ENCODE measurements at regions of chr20 and their contacts with region 1.

Region 1: GRCh38 chr20:53869466-53870258 is 200.7 kb downstream of the BCAS1 start:
- DNase-seq: peak; percentile 70
- H3K4me3 Mint-ChIP-seq: peak overlapping the region; percentile 62
- H3K27ac Mint-ChIP-seq: peak overlapping the region; percentile 85
- H3K4me1 Mint-ChIP-seq: peaks cover 73% of the 10 kb centered on the region
- H3K27me3 Mint-ChIP-seq: no peaks in the 10 kb centered on the region

Region 2: DNA sequence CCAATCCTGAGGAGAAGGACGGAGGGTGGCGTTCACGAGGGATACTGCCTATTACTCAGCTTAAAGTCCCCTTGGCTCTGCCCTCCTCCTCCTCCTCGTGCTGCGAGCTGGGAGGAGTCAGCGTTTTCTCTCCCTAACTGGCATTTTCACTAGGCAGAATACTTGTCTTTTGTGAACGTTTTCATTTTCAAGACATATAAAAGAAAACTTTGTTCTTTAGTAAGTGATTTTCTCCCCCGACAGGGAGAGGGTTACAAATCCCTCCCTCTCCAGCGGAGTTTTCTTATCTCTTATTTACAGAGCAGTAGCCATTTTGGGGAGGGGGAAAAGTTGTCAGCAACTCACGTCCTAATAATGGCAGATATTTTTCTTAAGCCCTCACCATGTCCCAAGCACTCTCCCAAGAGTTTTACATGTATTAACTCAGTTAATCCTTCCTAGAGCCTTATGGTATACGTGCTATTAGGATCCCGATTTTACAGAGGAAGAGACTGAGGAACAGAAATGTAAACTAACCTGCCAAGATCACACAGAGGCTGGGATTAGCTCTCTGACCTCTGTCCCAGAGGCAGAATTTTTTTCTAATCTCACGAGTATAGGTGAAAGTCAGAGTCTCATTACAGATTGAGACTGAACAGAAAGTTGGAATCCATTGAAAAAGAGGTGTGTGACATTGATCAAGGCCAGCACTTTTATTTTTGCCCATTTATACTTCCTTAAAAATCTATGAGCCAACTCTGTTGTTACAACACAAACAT is 246.0 kb before region 1 on chr20:
- intact Hi-C with region 1: loop called (anchors 1 kb)
- DNase-seq: peak; percentile 29
- H3K4me3 Mint-ChIP-seq: peak overlapping the region; percentile 74
- H3K27ac Mint-ChIP-seq: peak overlapping the region; percentile 94
- H3K4me1 Mint-ChIP-seq: peaks cover 37% of the 10 kb centered on the region
- H3K27me3 Mint-ChIP-seq: no peaks in the 10 kb centered on the region

Region 3: DNA sequence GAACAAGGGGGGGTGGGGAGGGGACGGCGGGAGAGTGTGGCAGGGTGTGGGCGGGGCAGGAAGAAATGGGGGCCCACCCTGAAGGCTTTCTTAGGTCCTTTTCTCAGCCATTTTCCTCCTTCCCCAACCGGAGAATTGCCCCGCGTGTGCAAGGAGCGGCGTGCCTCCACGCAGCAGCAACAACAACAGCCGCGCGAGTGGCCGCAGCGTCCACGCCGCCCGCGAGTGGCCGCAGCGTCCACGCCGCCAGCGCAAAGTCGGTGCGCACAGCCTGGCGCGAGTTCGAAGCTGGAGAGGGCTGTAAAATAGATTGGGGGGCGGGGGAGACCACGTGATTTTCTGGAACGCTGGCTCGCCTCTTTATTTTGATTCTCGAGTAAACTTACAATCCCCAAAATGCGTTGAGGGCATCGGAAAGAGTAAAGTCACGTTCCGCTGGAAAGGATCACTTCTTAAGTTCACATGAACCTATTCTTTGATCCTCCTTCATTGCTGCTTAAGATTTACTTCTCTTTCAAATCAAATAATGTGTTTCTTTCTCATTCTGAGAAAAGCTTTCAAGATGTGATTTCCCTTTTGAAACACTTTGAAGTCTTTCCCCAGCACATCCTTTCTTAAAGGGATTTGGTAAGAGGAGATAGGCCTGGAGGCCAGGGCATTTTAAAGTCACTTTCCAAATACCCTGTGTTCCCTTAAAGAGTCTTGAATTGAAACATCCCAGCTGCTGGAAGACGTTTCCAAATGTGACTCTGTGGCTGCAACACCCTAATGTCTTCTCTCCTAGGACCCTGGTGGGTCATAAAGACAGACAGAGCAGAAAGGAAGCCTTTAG is 209.4 kb before region 1 on chr20:
- intact Hi-C with region 1: loop called (anchors 1 kb)
- DNase-seq: no peak
- H3K4me3 Mint-ChIP-seq: peak overlapping the region; percentile 75
- H3K27ac Mint-ChIP-seq: peak overlapping the region; percentile 87
- H3K4me1 Mint-ChIP-seq: peaks cover 71% of the 10 kb centered on the region
- H3K27me3 Mint-ChIP-seq: no peaks in the 10 kb centered on the region

Region 4: DNA sequence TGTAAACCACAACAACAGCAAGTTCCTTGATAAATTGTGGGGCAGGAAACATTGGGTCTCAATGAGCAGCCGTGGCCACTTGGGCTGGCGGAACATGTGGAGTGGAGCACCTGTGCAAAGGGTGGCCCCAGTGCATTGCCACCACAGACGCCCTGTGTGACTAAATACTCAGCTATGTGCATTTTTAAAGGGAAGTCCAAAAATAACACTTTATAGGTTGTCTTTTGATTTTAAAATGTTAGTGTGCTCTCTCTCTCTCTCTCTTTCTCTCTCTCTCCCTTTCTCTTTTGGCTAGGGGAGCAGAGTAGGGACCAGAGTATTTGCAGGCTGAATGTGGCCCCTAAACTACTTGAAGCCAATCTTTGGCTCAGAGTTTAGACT is 35.6 kb before region 1 on chr20:
- intact Hi-C with region 1: loop called (anchors 2 kb)
- DNase-seq: no peak
- H3K4me3 Mint-ChIP-seq: no peak overlapping the region
- H3K27ac Mint-ChIP-seq: no peak overlapping the region
- H3K4me1 Mint-ChIP-seq: peaks cover 62% of the 10 kb centered on the region
- H3K27me3 Mint-ChIP-seq: no peaks in the 10 kb centered on the region

Region 5: GRCh38 chr20:53891306-53891944 is 21.8 kb after region 1 on chr20:
- intact Hi-C with region 1: loop called (anchors 1 kb)
- DNase-seq: no peak
- H3K4me3 Mint-ChIP-seq: no peak overlapping the region
- H3K27ac Mint-ChIP-seq: no peak overlapping the region
- H3K4me1 Mint-ChIP-seq: peaks cover 40% of the 10 kb centered on the region
- H3K27me3 Mint-ChIP-seq: no peaks in the 10 kb centered on the region

Region 6: DNA sequence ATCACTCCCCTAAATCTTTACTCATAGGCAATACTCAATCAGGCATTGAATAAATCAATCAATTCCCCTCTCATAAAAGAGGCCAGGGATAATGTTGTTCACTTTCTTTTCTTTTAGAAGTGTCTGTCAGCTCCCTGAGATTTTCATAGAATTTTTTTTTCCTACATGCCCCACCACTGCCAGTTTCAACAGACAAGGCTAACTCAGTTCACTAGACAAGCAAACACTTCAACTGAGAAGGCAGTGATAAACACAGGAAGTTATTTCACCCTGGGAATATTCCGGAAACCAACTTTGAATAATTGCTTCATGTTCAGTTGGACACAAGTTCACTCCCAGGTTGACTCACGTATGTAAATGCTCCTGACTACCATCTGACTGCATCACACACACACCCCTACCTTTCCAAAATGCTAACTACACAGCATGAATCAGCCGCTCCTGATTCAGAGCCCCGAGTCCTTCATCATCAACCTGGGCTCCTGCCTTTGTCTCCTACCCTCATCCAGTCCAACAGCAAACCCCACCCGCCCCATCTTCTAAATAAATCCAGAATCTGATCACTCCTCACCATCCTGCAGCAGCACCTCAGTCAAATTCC is 56.9 kb after region 1 on chr20:
- intact Hi-C with region 1: loop called (anchors 1 kb)
- DNase-seq: no peak
- H3K4me3 Mint-ChIP-seq: no peak overlapping the region
- H3K27ac Mint-ChIP-seq: peak overlapping the region; percentile 38
- H3K4me1 Mint-ChIP-seq: peaks cover 46% of the 10 kb centered on the region
- H3K27me3 Mint-ChIP-seq: peaks cover 3% of the 10 kb centered on the region

Measured in activated T-helper 1 cell treated with anti-CD3 and anti-CD28 coated beads, Interleukin-12 subunit alpha, Interleukin-12 subunit beta, Interleukin-2, Interleukin-4 antibody, amounts not matched to agents 30 ng/mL and 10 ng/mL and 1 ng/mL, durations not matched to agents 14 hours and 24 hours and 36 hours (primary cell).